Psoas muscle (tissue), 8 donors: ENCODE measurements at regions of chr4 and their contacts with region 1.

Region 1: DNA sequence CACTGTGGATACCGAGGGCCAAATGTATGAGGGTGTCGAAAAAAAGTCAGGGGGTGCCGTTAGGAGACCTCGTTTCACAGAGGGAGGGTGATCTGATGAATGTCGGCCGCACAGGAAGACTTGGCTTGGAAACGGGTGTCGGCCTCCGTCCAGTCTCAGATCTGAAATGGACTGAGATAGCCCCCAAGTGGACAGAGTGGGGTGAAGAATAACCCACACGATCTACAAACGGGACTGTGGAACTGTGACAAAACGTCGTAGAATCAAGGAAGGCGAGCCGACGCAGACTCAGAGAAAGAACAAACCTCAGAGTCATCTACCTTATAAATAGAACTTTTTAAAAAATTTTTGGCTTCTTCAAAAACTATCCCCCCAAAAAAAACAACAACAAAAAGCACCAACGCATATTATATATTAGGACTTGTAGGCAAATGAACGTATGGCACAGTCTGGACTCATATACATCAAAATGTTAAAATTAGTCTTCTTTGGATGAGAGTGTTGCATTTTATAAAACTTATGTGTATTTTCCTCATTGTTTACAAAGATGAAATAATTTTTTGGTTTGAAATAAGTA is 63.8 kb upstream of the IRF2 start:
- DNase-seq: peak; percentile 88 to 94
- ATAC-seq: peak; percentile 92 to 95 (median 94)
- H3K4me3 ChIP-seq: peak overlapping the region; percentile 89
- H3K27ac ChIP-seq: peak overlapping the region; percentile 98
- H3K4me1 ChIP-seq: peaks cover 19% of the 10 kb centered on the region
- H3K27me3 ChIP-seq: no peaks in the 10 kb centered on the region
- CTCF ChIP-seq: peak; percentile 67

Region 2: GRCh38 chr4:184263910-184264732 is 274.0 kb before region 1 on chr4:
- intact Hi-C with region 1: loop called (anchors 1 to 2 kb)
- DNase-seq: peak; percentile 93 to 95
- ATAC-seq: peak; percentile 78 to 95 (median 86)
- H3K4me3 ChIP-seq: no peak overlapping the region
- H3K27ac ChIP-seq: no peak overlapping the region
- H3K4me1 ChIP-seq: no peaks in the 10 kb centered on the region
- H3K27me3 ChIP-seq: no peaks in the 10 kb centered on the region
- CTCF ChIP-seq: peak; percentile 95

Region 3: GRCh38 chr4:184282251-184282713 is 255.8 kb before region 1 on chr4:
- intact Hi-C with region 1: loop called (anchors 1 to 5 kb)
- DNase-seq: no peak
- ATAC-seq: peak in 2 of 4 donors; percentile 58 to 71
- H3K4me3 ChIP-seq: no peak overlapping the region
- H3K27ac ChIP-seq: no peak overlapping the region
- H3K4me1 ChIP-seq: peaks cover 2% of the 10 kb centered on the region
- H3K27me3 ChIP-seq: no peaks in the 10 kb centered on the region
- CTCF ChIP-seq: no peak

Region 4: DNA sequence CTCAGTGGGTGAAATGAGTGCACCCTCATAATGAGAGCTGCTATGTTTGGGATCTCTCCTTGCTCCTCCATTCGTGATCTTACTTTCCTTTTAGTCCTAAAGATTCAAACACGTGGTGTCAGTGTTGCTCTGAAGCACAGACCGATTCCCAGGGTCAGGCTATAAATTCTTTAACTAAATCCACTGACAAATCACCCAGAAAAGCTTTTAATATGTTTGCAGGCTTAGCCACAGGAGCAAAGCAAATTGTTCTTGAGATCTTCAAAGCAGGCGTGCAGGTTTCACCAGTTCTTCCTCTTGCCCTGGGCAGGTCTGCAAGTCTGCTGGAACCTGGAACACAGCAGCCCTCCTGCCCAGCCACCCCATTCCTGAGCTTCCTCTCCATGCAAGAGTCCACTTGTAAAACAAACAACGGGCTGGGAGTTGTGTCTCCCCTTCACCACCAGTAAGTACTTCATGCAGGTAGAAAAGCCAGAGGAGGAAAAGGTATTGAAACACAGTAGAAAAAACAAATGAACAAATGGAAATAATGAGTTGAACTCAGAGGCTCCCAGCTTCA is 250.3 kb before region 1 on chr4:
- intact Hi-C with region 1: loop called (anchors 1 to 5 kb)
- DNase-seq: no peak
- ATAC-seq: peak; percentile 37 to 93 (median 82)
- H3K4me3 ChIP-seq: no peak overlapping the region
- H3K27ac ChIP-seq: peak overlapping the region; percentile 50
- H3K4me1 ChIP-seq: peaks cover 11% of the 10 kb centered on the region
- H3K27me3 ChIP-seq: no peaks in the 10 kb centered on the region
- CTCF ChIP-seq: peak; percentile 55

Region 5: DNA sequence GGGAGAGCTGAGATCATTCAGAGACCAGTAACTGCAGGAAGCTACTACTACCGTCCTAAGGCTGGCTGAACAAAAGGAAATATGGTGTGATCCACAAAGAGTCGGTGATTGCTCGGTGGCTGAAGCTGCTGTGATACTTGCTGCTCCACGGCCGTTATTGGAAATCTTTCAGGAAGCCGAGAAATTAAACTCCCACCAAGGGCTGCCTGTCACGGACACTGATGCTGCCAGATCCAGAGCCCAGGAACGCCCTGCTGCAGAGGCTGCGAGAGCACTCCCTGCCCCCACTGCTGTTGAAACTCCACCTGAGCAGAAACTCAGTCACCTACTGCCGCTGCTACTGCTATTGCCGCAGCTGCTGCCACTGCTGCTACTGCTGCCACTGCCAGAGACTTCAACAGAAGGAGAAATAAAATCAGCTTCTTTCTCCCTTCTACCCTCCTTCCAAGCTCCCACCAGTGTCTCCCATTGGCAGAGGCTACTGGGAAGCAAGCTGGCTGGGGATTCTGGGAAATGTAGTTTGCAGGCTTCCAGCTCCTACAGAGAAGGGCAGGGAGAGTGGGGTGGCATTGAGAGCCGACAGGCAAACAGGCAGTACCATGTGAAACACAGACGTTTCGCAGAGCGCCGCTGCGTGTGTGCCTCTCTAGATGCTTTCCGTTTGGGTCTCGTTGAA is 194.5 kb before region 1 on chr4:
- intact Hi-C with region 1: loop called in 1 of 2 experiments (anchors 5 kb)
- DNase-seq: peak; percentile 62 to 77
- ATAC-seq: peak; percentile 64 to 78 (median 68)
- H3K4me3 ChIP-seq: peak overlapping the region; percentile 68
- H3K27ac ChIP-seq: peak overlapping the region; percentile 94
- H3K4me1 ChIP-seq: peaks cover 46% of the 10 kb centered on the region
- H3K27me3 ChIP-seq: no peaks in the 10 kb centered on the region
- CTCF ChIP-seq: no peak

Region 6: DNA sequence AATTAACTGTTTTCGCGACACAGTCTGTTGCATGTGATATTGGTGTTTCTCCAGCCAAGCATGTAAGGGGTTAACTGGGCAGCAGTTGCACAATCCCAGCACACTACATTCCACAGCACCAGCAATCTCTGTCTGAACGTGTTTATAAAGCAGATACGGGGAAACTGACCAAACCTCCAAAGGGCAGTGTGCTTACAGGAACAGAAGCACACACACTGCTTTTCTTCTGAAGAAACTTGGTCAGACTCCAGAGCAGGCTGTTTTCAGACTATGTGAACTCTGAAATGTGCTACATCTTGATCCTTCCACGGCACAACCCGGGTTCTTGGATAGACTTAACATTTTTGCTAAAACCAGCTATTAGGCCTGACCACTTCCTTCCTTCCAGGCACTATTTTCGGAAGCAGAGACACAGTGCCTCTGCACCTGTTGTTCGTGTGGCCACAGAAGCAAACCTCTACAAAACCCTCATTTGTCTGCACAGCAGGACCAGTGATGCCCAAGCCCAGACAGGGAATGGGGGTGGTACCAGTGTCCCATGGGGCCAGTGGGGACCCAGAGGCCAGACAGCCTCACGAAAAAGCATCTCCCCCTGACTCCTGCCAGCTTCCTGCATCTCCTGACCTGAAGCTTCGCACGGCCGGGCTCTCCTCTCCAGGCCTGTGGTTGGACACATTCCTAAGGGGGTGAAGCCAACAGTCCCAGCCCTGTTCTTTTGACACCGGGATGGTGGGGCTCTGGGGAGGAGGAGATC is 153.9 kb before region 1 on chr4:
- intact Hi-C with region 1: loop called in 1 of 2 experiments (anchors 5 kb)
- DNase-seq: no peak
- ATAC-seq: peak; percentile 48 to 60 (median 58)
- H3K4me3 ChIP-seq: peak overlapping the region; percentile 42
- H3K27ac ChIP-seq: peak overlapping the region; percentile 82
- H3K4me1 ChIP-seq: peaks cover 62% of the 10 kb centered on the region
- H3K27me3 ChIP-seq: no peaks in the 10 kb centered on the region
- CTCF ChIP-seq: no peak

Region 7: GRCh38 chr4:184649026-184649970 is 111.2 kb after region 1 on chr4 and contains the starts of genes CASP3 and PRIMPOL:
- intact Hi-C with region 1: loop called in 1 of 2 experiments (anchors 5 kb)
- DNase-seq: peak; percentile 98 to 99
- ATAC-seq: peak; percentile 92 to 95 (median 94)
- H3K4me3 ChIP-seq: peak within 1 kb of the TSS; percentile 91
- H3K27ac ChIP-seq: peak within 1 kb of the TSS; percentile 99
- H3K4me1 ChIP-seq: peaks cover 53% of the 10 kb centered on the region
- H3K27me3 ChIP-seq: no peaks in the 10 kb centered on the region
- CTCF ChIP-seq: peak; percentile 29
- total RNA-seq, gene CASP3: 13.8 to 49.7 (median 20.5) TPM
- total RNA-seq, gene PRIMPOL: 4.8 to 10.1 (median 7.5) TPM

Region 8: DNA sequence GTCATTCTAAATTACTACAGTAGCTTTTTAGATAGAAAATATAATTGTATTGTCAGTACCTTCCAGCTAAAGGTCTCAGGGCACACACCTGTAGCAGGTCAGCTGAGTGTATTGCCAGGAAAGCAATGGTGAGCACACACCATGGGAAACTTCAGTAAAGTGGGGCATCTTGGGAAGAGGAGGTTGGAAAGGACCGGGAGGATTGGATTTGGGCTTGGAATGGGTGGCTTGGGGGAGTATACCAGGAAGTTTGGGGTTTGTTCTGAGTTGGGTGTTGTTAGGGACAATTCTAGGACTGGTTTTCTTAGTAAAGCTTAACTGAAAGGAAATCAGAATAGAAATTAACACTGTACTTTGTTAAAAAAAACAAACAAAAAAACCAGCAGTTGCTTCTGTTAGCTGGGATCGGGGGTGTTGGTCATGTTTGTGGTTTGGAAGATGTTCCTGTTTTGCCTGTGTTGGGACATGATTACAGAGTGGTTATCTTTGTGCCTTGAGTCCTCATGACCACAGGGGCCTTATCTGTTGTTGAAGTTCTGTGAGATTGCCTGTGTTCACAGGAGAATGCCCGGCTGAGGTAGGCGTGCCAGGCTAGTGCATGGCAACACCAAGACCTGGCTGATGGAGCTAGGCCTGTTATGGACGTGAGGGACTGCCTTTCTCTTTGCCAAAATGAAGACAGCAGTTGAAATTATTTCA is 146.5 kb after region 1 on chr4:
- intact Hi-C with region 1: no loop called
- DNase-seq: no peak
- ATAC-seq: no peak
- H3K4me3 ChIP-seq: no peak overlapping the region
- H3K27ac ChIP-seq: no peak overlapping the region
- H3K4me1 ChIP-seq: no peaks in the 10 kb centered on the region
- H3K27me3 ChIP-seq: no peaks in the 10 kb centered on the region
- CTCF ChIP-seq: no peak

Region 9: GRCh38 chr4:185165605-185166063 is 627.5 kb after region 1 on chr4:
- intact Hi-C with region 1: no loop called
- DNase-seq: no peak
- ATAC-seq: no peak
- H3K4me3 ChIP-seq: no peak overlapping the region
- H3K27ac ChIP-seq: no peak overlapping the region
- H3K4me1 ChIP-seq: no peaks in the 10 kb centered on the region
- H3K27me3 ChIP-seq: no peaks in the 10 kb centered on the region
- CTCF ChIP-seq: no peak